Activated T-helper 1 cell treated with anti-CD3 and anti-CD28 coated beads, Interleukin-12 subunit alpha, Interleukin-12 subunit beta, Interleukin-2, Interleukin-4 antibody, amounts not matched to agents 30 ng/mL and 10 ng/mL and 1 ng/mL, durations not matched to agents 14 hours and 24 hours and 36 hours (primary cell): ENCODE measurements at regions of chr10 and their contacts with region 1.

Region 1: DNA sequence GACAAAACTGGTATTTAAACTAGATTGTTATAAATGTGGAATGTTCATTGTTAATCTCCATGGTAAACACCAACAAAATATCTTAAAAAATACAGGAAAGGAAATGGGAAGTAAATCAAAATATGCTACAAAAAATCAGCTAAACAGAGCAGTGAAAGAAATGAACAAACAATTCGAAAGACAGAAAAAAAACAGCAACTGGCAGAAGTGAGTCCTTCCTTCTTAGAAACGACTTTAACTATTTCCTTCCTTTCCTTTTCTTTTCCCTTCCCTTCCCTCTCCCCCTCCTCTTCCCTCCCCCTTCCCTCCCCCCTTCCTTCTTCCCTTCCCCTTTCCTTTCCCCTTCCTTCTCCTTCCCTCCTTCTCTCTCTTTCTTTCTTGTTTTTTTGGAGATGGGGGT is 12.8 kb downstream of the ZNF248 start:
- DNase-seq: no peak
- H3K4me3 Mint-ChIP-seq: no peak overlapping the region
- H3K27ac Mint-ChIP-seq: no peak overlapping the region
- H3K4me1 Mint-ChIP-seq: no peaks in the 10 kb centered on the region
- H3K27me3 Mint-ChIP-seq: no peaks in the 10 kb centered on the region

Region 2: DNA sequence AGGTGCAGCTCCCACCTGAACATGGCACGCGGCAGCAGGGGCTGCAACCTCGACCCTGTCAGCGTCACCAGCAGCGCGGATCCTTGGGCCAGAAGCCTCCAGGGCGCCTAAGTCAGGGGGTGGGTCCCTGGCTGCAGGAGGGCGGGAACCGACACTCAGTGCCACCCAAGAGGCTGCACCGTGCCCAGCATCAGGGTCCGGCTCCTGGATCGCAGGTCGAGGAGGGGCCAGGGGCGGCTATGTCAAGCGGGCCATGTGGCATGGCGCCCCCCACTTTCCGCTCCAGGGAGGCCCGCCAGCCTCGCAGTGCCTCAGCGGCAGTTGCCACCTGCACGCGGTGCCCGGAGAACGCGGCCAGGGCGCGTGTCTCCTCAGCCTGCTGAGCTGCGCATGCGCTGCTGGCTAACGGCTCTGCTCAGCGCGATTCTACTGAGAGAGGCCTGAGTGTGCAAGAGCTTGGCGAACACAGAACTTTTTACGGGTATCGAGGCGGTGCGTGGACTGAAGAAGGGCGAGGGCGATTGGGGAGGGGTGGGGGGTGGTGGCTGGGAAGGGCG is 719.4 kb before region 1 on chr10 and contains the start of gene ANKRD30A:
- intact Hi-C with region 1: no loop called
- DNase-seq: no peak
- H3K4me3 Mint-ChIP-seq: no peak within 1 kb of the TSS
- H3K27ac Mint-ChIP-seq: no peak within 1 kb of the TSS
- H3K4me1 Mint-ChIP-seq: no peaks in the 10 kb centered on the region
- H3K27me3 Mint-ChIP-seq: no peaks in the 10 kb centered on the region
- total RNA-seq, gene ANKRD30A: not detected in 2 replicates

Region 3: GRCh38 chr10:37684765-37685164 is 159.9 kb before region 1 on chr10:
- intact Hi-C with region 1: no loop called
- DNase-seq: no peak
- H3K4me3 Mint-ChIP-seq: no peak overlapping the region
- H3K27ac Mint-ChIP-seq: no peak overlapping the region
- H3K4me1 Mint-ChIP-seq: no peaks in the 10 kb centered on the region
- H3K27me3 Mint-ChIP-seq: no peaks in the 10 kb centered on the region

Region 4: DNA sequence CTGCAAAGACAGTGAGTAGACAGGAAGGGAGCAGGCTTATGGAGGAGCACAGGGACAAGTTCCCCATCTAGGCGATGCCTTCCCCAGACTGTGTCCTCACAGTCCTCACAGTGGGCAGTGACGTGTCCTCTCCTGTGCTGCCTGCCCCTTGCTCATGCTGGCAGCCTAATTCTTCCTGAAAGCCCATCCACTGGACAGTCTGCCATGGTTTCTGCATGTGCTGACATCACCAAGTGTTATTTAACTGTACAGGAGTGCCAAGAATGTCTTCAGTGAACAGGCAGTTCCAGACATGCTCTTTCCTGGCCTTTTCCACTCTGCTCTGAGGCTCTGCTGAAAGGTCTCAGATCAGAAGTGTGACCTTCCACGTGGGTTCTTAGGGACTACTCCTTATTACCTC is 41.4 kb before region 1 on chr10:
- intact Hi-C with region 1: loop called (anchors 2 kb)
- DNase-seq: no peak
- H3K4me3 Mint-ChIP-seq: no peak overlapping the region
- H3K27ac Mint-ChIP-seq: no peak overlapping the region
- H3K4me1 Mint-ChIP-seq: no peaks in the 10 kb centered on the region
- H3K27me3 Mint-ChIP-seq: no peaks in the 10 kb centered on the region